K562 (cell line): ENCODE measurements at regions of chr6 and their contacts with region 1.

Region 1: DNA sequence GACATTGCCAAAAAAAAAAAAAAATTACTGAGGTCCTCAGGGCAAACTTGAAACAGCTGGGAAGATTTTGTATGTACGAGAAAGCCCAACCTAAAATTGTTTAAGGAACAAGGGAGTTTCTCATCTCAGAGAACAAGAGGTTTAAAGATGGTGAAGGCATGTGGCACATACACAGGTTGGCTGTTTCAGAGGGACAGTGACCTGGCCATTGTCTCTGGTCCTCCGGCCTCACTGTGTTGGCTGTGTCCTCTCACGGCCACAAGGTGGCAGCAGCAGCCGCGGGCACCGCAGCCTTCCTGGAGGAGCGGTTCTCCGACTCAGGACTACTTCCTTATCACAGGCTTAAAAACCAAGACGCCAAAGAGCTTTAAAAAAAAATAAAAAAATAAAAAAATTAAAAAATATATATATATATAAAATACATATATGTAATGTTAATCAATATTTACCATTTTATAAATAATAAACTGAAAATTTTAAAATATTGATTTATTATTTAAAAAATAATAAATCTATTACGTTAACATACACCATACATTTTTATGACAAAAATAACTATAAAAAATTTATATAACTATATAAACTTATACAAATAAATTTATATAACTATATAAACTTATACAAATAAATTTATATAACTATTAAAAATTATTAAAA is 52.8 kb downstream of the GTF2H5 start:
- DNase-seq: peak; percentile 87 to 94 (median 89)
- ATAC-seq: peak; percentile 99
- H3K4me3 ChIP-seq: no peak overlapping the region
- H3K27ac ChIP-seq: no peak overlapping the region
- H3K4me1 ChIP-seq: no peaks in the 10 kb centered on the region; a peak in 1 of 5 replicates
- H3K27me3 ChIP-seq: no peaks in the 10 kb centered on the region
- CTCF ChIP-seq: peak; percentile 93 to 98 (median 95)
- EP300 ChIP-seq: no peak; the same call in 1 of the 2 replicates
- POLR2A ChIP-seq: no peak
- RAD21 ChIP-seq: peak; percentile 98 to 99

Region 2: GRCh38 chr6:157099912-157100593 is 1120.9 kb before region 1 on chr6:
- CTCF ChIA-PET with region 1: no interaction called
- POLR2A ChIA-PET with region 1: no interaction called
- in situ Hi-C with region 1: no loop called
- intact Hi-C with region 1: no loop called
- DNase-seq: peak; percentile 33 to 71 (median 48)
- ATAC-seq: peak; percentile 86
- H3K4me3 ChIP-seq: no peak overlapping the region
- H3K27ac ChIP-seq: peak overlapping the region; percentile 19; the same call in 2 of the 3 replicates
- H3K4me1 ChIP-seq: peaks cover 0 to 12% of the 10 kb centered on the region in 2 experiments; a peak in 3 of 5 replicates
- H3K27me3 ChIP-seq: no peaks in the 10 kb centered on the region
- CTCF ChIP-seq: no peak
- EP300 ChIP-seq: peak; percentile 74; the same call in 1 of the 2 replicates
- POLR2A ChIP-seq: no peak
- RAD21 ChIP-seq: no peak

Region 3: GRCh38 chr6:158198461-158198860 is 22.5 kb before region 1 on chr6:
- CTCF ChIA-PET with region 1: no interaction called
- POLR2A ChIA-PET with region 1: no interaction called
- in situ Hi-C with region 1: no loop called
- intact Hi-C with region 1: no loop called
- DNase-seq: no peak
- ATAC-seq: no peak
- H3K4me3 ChIP-seq: no peak overlapping the region
- H3K27ac ChIP-seq: no peak overlapping the region
- H3K4me1 ChIP-seq: no peaks in the 10 kb centered on the region
- H3K27me3 ChIP-seq: no peaks in the 10 kb centered on the region
- CTCF ChIP-seq: no peak
- EP300 ChIP-seq: no peak
- POLR2A ChIP-seq: no peak
- RAD21 ChIP-seq: no peak

Region 4: GRCh38 chr6:158518191-158519127 is 297.5 kb after region 1 on chr6:
- CTCF ChIA-PET with region 1: interaction called, 6 read pairs
- POLR2A ChIA-PET with region 1: no interaction called
- in situ Hi-C with region 1: no loop called
- intact Hi-C with region 1: loop called (anchors 1 kb)
- DNase-seq: peak; percentile 57 to 73 (median 62)
- ATAC-seq: peak; percentile 91
- H3K4me3 ChIP-seq: peak overlapping the region; percentile 15
- H3K27ac ChIP-seq: no peak overlapping the region
- H3K4me1 ChIP-seq: peaks cover 0 to 3% of the 10 kb centered on the region in 2 experiments; a peak in 2 of 5 replicates
- H3K27me3 ChIP-seq: peaks cover 52 to 78% of the 10 kb centered on the region in 2 experiments
- CTCF ChIP-seq: peak; percentile 72 to 76 (median 75)
- EP300 ChIP-seq: no peak
- POLR2A ChIP-seq: no peak
- RAD21 ChIP-seq: peak; percentile 63 to 75

Region 5: DNA sequence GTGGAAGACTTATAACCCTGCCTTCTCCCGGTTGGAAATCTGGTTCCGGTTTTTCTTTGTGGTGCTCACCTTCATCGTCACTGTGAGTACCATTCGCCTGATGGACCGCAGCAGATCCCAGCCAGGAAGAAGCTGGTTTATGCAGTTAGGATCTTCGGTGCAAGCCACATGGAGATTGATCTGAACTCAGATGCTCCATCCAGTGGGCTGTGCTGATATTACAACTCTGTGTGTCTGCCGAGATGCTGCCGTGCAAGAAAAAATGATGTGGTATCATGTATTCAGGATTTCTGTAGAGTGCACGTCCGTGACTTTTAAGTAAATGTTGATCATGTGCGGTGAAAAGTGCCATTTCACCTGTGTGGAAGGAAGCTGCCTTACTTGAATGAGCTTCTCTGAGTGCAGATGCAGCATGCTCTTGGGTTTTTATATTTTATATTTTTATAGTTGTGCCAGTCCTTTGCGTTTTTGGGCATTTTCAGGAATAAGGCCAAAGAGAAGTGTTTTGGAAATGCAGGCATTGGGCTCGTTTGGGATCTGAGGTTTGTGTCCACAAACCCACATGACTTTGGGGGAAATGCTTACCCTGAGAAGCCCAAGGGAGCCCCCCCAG is 384.5 kb after region 1 on chr6:
- CTCF ChIA-PET with region 1: interaction called, 7 read pairs
- POLR2A ChIA-PET with region 1: interaction called, 3 read pairs
- in situ Hi-C with region 1: no loop called
- intact Hi-C with region 1: loop called (anchors 1 kb)
- DNase-seq: peak; percentile 60 to 73 (median 70)
- ATAC-seq: peak; percentile 89
- H3K4me3 ChIP-seq: no peak overlapping the region
- H3K27ac ChIP-seq: no peak overlapping the region
- H3K4me1 ChIP-seq: peaks cover 0 to 4% of the 10 kb centered on the region in 2 experiments; a peak in 1 of 5 replicates
- H3K27me3 ChIP-seq: no peaks in the 10 kb centered on the region
- CTCF ChIP-seq: peak; percentile 65 to 75 (median 71)
- EP300 ChIP-seq: no peak
- POLR2A ChIP-seq: no peak
- RAD21 ChIP-seq: peak; percentile 45 to 71; a peak in 3 of 4 replicates

Region 6: DNA sequence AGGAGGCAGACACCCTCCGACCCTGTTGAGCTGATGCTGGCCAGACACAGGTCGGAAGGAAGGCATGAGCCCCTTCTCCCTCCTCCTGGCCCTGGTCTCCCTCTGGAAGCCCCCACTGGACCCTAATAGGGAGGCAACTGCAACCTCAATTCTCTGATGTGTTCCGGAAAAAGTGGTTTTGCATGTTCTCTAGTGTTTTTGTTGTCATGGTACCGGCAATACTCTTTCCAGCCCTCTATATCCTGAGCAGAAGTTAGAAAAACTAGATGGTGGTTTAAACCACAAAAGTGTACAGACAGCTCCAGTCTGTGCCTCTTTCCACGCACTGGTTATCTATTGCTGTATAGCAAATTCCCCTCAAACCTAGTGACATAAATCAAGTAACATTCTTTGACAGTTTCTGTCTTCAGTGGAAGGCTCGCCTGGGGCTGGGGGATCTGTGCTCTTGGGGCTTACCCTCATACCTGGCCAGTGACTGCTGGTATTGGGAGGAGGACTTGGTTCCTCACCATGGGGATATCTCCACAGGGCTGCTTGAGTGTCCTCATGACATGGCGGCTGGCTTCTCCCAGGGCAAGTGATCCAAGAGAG is 466.0 kb after region 1 on chr6:
- CTCF ChIA-PET with region 1: interaction called, 23 read pairs
- POLR2A ChIA-PET with region 1: interaction called, 3 read pairs
- in situ Hi-C with region 1: no loop called
- intact Hi-C with region 1: no loop called
- DNase-seq: no peak
- ATAC-seq: no peak; the same call in 2 of the 3 replicates
- H3K4me3 ChIP-seq: no peak overlapping the region
- H3K27ac ChIP-seq: no peak overlapping the region
- H3K4me1 ChIP-seq: no peaks in the 10 kb centered on the region
- H3K27me3 ChIP-seq: peaks cover 43 to 57% of the 10 kb centered on the region in 2 experiments
- CTCF ChIP-seq: no peak
- EP300 ChIP-seq: no peak
- POLR2A ChIP-seq: no peak
- RAD21 ChIP-seq: no peak

Region 7: DNA sequence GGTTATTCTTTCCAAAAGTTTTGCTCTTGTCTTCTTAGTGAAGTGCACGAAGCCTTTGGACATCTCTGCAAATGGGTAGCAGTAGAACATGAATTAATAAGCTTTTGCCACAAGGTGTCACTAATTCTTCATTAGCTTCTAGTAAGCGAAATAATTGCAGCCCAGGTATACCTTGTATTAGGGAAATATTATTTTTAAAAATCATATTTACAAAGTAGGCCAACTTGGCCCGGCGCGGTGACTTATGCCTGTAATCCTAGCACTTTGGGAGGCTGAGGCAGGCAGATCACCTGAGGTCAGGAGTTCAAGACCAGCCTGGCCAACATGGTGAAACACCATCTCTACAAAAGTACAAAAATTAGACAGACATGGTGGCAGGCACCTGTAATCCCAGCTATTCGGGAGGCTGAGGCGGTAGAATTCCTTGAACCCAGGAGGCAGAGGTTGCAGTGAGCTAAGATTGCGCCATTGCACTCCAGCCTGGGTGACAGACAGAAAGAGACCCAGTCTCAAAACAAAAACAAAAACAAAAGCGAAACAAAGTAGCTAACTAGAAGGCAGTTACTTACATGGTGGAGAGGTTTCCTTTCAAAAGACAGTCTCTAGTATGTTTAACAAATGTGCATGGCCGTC is 787.9 kb after region 1 on chr6:
- CTCF ChIA-PET with region 1: interaction called, 11 read pairs
- POLR2A ChIA-PET with region 1: no interaction called
- in situ Hi-C with region 1: no loop called
- intact Hi-C with region 1: no loop called
- DNase-seq: peak in 2 of 4 experiments; percentile 31 to 35
- ATAC-seq: peak; percentile 61
- H3K4me3 ChIP-seq: no peak overlapping the region
- H3K27ac ChIP-seq: no peak overlapping the region
- H3K4me1 ChIP-seq: peaks cover 7 to 8% of the 10 kb centered on the region in 2 experiments; a peak in 3 of 5 replicates
- H3K27me3 ChIP-seq: peaks cover 15 to 22% of the 10 kb centered on the region in 2 experiments; a peak in 3 of 5 replicates
- CTCF ChIP-seq: peak; percentile 46 to 70 (median 50); a peak in 4 of 6 replicates
- EP300 ChIP-seq: no peak
- POLR2A ChIP-seq: no peak
- RAD21 ChIP-seq: peak; percentile 65 to 72